ENCODE measurements at regions of chr3 and their contacts with region 1.

Region 1: DNA sequence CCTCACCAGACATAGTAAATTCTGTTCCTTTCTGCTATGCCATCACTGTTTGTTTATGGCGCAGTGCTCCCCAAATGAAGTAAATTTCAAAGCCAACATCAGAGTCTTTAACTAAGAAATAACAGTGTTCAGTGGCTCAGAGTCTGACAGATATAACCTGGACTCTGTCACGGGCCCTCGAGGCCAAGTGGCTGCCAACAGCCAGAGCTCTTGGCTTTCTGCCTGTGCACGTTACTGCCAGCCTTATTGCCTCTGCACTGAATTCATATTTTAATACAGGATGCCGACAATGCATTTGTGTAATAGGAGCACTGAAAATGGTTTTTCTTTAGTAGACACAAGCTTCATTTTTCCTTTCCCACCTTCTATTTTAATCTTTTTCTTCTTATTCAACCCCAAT is 219.9 kb downstream of the NLGN1 start:
- DNase-seq: peak; percentile 52 to 69
- ATAC-seq: peak; percentile 78 to 97 (median 93)
- H3K4me3 ChIP-seq: no peak overlapping the region
- H3K27ac ChIP-seq: peak overlapping the region in 5 of 10 donors; percentile 51 to 63 (median 54)
- H3K4me1 ChIP-seq: peaks cover 0 to 21% (median 0%) of the 10 kb centered on the region in 9 donors
- H3K27me3 ChIP-seq: no peaks in the 10 kb centered on the region
- CTCF ChIP-seq: no peak

Region 2: GRCh38 chr3:173567997-173568396 is 49.5 kb before region 1 on chr3:
- intact Hi-C with region 1: no loop called
- DNase-seq: no peak
- ATAC-seq: no peak
- H3K4me3 ChIP-seq: no peak overlapping the region
- H3K27ac ChIP-seq: no peak overlapping the region
- H3K4me1 ChIP-seq: no peaks in the 10 kb centered on the region
- H3K27me3 ChIP-seq: no peaks in the 10 kb centered on the region
- CTCF ChIP-seq: no peak

Region 3: GRCh38 chr3:173660645-173661615 is 43.4 kb after region 1 on chr3:
- intact Hi-C with region 1: loop called in 2 of 10 experiments (anchors 5 kb)
- DNase-seq: no peak
- ATAC-seq: peak in 4 of 8 donors; percentile 75 to 84 (median 78)
- H3K4me3 ChIP-seq: no peak overlapping the region
- H3K27ac ChIP-seq: peak overlapping the region in 5 of 10 donors; percentile 30 to 61 (median 40)
- H3K4me1 ChIP-seq: peaks cover 0 to 20% (median 0%) of the 10 kb centered on the region in 9 donors
- H3K27me3 ChIP-seq: no peaks in the 10 kb centered on the region
- CTCF ChIP-seq: no peak

Measured in heart right ventricle (tissue), 16 donors.